Transverse colon (tissue), 4 donors: ENCODE measurements at regions of chr3 and their contacts with region 1.

Region 1: GRCh38 chr3:106617276-106617675 is 748.5 kb upstream of the CBLB start:
- DNase-seq: no peak
- H3K4me3 ChIP-seq: no peak overlapping the region
- H3K27ac ChIP-seq: no peak overlapping the region
- H3K4me1 ChIP-seq: no peaks in the 10 kb centered on the region
- H3K27me3 ChIP-seq: no peaks in the 10 kb centered on the region
- CTCF ChIP-seq: no peak
- EP300 ChIP-seq: no peak
- POLR2A ChIP-seq: no peak

Region 2: GRCh38 chr3:105691633-105692032 is 925.6 kb before region 1 on chr3:
- in situ Hi-C with region 1: loop called (anchors 25 kb)
- intact Hi-C with region 1: loop called (anchors 5 kb)
- DNase-seq: no peak
- H3K4me3 ChIP-seq: no peak overlapping the region
- H3K27ac ChIP-seq: no peak overlapping the region
- H3K4me1 ChIP-seq: no peaks in the 10 kb centered on the region
- H3K27me3 ChIP-seq: no peaks in the 10 kb centered on the region
- CTCF ChIP-seq: no peak
- EP300 ChIP-seq: no peak
- POLR2A ChIP-seq: no peak